Activated T-helper 1 cell treated with anti-CD3 and anti-CD28 coated beads, Interleukin-12 subunit alpha, Interleukin-12 subunit beta, Interleukin-2, Interleukin-4 antibody, amounts not matched to agents 30 ng/mL and 10 ng/mL and 1 ng/mL, durations not matched to agents 14 hours and 24 hours and 36 hours (primary cell): ENCODE measurements at regions of chr1 and their contacts with region 1.

Region 1: GRCh38 chr1:2255420-2256369 is 27.6 kb downstream of the SKI start:
- DNase-seq: peak; percentile 73
- H3K4me3 Mint-ChIP-seq: no peak overlapping the region
- H3K27ac Mint-ChIP-seq: no peak overlapping the region
- H3K4me1 Mint-ChIP-seq: peaks cover 39% of the 10 kb centered on the region
- H3K27me3 Mint-ChIP-seq: no peaks in the 10 kb centered on the region

Region 2: GRCh38 chr1:2044510-2045319 is 211.0 kb before region 1 on chr1:
- intact Hi-C with region 1: no loop called
- DNase-seq: peak; percentile 62
- H3K4me3 Mint-ChIP-seq: no peak overlapping the region
- H3K27ac Mint-ChIP-seq: no peak overlapping the region
- H3K4me1 Mint-ChIP-seq: peaks cover 8% of the 10 kb centered on the region
- H3K27me3 Mint-ChIP-seq: peaks cover 35% of the 10 kb centered on the region

Region 3: GRCh38 chr1:2152954-2153353 is 102.7 kb before region 1 on chr1:
- intact Hi-C with region 1: no loop called
- DNase-seq: no peak
- H3K4me3 Mint-ChIP-seq: no peak overlapping the region
- H3K27ac Mint-ChIP-seq: no peak overlapping the region
- H3K4me1 Mint-ChIP-seq: no peaks in the 10 kb centered on the region
- H3K27me3 Mint-ChIP-seq: no peaks in the 10 kb centered on the region

Region 4: DNA sequence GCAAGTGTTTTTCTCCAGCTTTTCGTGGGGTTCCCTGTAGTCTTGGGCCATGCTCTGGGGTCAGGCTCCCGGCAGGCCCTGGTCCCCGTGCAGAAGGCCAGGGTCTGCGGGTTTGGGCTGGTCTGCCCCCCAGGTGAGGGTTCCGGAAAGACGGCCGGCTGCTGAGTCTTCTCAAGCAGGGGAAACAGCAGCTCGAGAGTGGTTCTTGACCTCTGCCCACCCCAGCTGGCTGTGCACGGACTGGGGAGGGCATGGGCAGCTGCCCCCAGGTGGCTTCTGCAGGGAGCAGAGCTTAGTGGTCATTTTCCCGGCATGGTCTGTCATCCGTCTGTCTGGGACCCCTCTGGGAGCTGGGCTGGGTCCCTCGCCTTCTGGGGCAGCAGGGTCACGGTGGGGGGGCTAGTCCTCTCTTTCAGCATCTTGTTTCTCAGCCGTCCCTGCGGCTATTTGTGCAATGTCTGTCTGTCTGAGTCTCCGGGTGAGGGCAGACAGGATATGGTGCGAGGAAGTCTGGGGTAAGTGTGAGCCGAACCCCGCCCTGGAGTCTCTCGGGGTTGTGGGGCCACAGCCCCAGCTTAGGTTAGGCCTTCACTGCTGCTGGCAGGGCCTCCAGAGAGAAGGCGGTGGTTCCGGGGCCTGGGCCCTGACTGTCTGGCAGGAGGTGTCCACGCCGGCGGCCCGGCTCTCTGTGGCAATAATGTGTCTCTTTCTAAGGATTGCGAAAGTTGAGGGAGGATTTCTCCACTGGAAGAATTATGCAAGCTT is 21.5 kb before region 1 on chr1:
- intact Hi-C with region 1: loop called (anchors 2 kb)
- DNase-seq: peak; percentile 68
- H3K4me3 Mint-ChIP-seq: peak overlapping the region; percentile 93
- H3K27ac Mint-ChIP-seq: peak overlapping the region; percentile 78
- H3K4me1 Mint-ChIP-seq: peaks cover 71% of the 10 kb centered on the region
- H3K27me3 Mint-ChIP-seq: no peaks in the 10 kb centered on the region

Region 5: GRCh38 chr1:2352840-2353550 is 97.3 kb after region 1 on chr1:
- intact Hi-C with region 1: no loop called
- DNase-seq: no peak
- H3K4me3 Mint-ChIP-seq: no peak overlapping the region
- H3K27ac Mint-ChIP-seq: no peak overlapping the region
- H3K4me1 Mint-ChIP-seq: no peaks in the 10 kb centered on the region
- H3K27me3 Mint-ChIP-seq: peaks cover 3% of the 10 kb centered on the region

Region 6: GRCh38 chr1:2474933-2475371 is 219.3 kb after region 1 on chr1:
- intact Hi-C with region 1: no loop called
- DNase-seq: no peak
- H3K4me3 Mint-ChIP-seq: no peak overlapping the region
- H3K27ac Mint-ChIP-seq: no peak overlapping the region
- H3K4me1 Mint-ChIP-seq: no peaks in the 10 kb centered on the region
- H3K27me3 Mint-ChIP-seq: peaks cover 2% of the 10 kb centered on the region